T-cell (primary cell): ENCODE measurements at regions of chr9 and their contacts with region 1.

Region 1: GRCh38 chr9:127937388-127938280 is at the start of gene DPM2:
- DNase-seq: peak; percentile 73 to 93 (median 86)
- ATAC-seq: peak; percentile 76 to 89 (median 82)
- H3K4me3 ChIP-seq: peak within 1 kb of the TSS; percentile 68 to 71
- H3K4me3 Mint-ChIP-seq: peak within 1 kb of the TSS; percentile 82 to 87 (median 86)
- H3K27ac ChIP-seq: peak within 1 kb of the TSS; percentile 59
- H3K27ac Mint-ChIP-seq: peak within 1 kb of the TSS; percentile 88 to 93
- H3K4me1 ChIP-seq: peaks cover 9 to 44% of the 10 kb centered on the region in 2 experiments
- H3K4me1 Mint-ChIP-seq: peaks cover 45 to 57% (median 55%) of the 10 kb centered on the region in 3 donors
- H3K27me3 ChIP-seq: no peaks in the 10 kb centered on the region
- H3K27me3 Mint-ChIP-seq: peaks cover 0 to 3% of the 10 kb centered on the region in 2 donors
- total RNA-seq, gene DPM2: 32.3 to 66.5 (median 60.5) TPM

Region 2: GRCh38 chr9:127715394-127716337 is 222.0 kb before region 1 on chr9 and contains the starts of genes PTRH1 and TTC16:
- CTCF ChIA-PET with region 1: no interaction called
- POLR2A ChIA-PET with region 1: no interaction called
- DNase-seq: peak; percentile 89 to 98 (median 95)
- ATAC-seq: peak; percentile 92 to 95 (median 94)
- H3K4me3 ChIP-seq: peak within 1 kb of the TSS; percentile 78 to 97
- H3K4me3 Mint-ChIP-seq: peak within 1 kb of the TSS; percentile 94 to 98 (median 98)
- H3K27ac ChIP-seq: peak within 1 kb of the TSS; percentile 75
- H3K27ac Mint-ChIP-seq: peak within 1 kb of the TSS; percentile 91 to 95
- H3K4me1 ChIP-seq: peaks cover 8 to 70% of the 10 kb centered on the region in 2 experiments
- H3K4me1 Mint-ChIP-seq: peaks cover 34 to 46% (median 38%) of the 10 kb centered on the region in 3 donors
- H3K27me3 ChIP-seq: no peaks in the 10 kb centered on the region
- H3K27me3 Mint-ChIP-seq: no peaks in the 10 kb centered on the region
- total RNA-seq, gene PTRH1: 4.4 to 15.9 (median 12.9) TPM
- total RNA-seq, gene TTC16: 4.6 to 31.8 (median 6.2) TPM

Region 3: GRCh38 chr9:127899128-127899946 is 38.3 kb before region 1 on chr9 and contains the start of gene ST6GALNAC6:
- CTCF ChIA-PET with region 1: no interaction called
- POLR2A ChIA-PET with region 1: interaction called in 1 of 2 experiments, 14 read pairs
- DNase-seq: peak in 32 of 35 experiments; percentile 30 to 81 (median 52)
- ATAC-seq: peak; percentile 81 to 87 (median 85)
- H3K4me3 ChIP-seq: peak within 1 kb of the TSS; percentile 65 to 89
- H3K4me3 Mint-ChIP-seq: peak within 1 kb of the TSS; percentile 81 to 87 (median 87)
- H3K27ac ChIP-seq: peak within 1 kb of the TSS; percentile 58
- H3K27ac Mint-ChIP-seq: peak within 1 kb of the TSS; percentile 81 to 84
- H3K4me1 ChIP-seq: peaks cover 21 to 67% of the 10 kb centered on the region in 2 experiments
- H3K4me1 Mint-ChIP-seq: peaks cover 44 to 48% (median 45%) of the 10 kb centered on the region in 3 donors
- H3K27me3 ChIP-seq: no peaks in the 10 kb centered on the region
- H3K27me3 Mint-ChIP-seq: no peaks in the 10 kb centered on the region
- total RNA-seq, gene ST6GALNAC6: 73.0 to 123 (median 86.3) TPM

Region 4: DNA sequence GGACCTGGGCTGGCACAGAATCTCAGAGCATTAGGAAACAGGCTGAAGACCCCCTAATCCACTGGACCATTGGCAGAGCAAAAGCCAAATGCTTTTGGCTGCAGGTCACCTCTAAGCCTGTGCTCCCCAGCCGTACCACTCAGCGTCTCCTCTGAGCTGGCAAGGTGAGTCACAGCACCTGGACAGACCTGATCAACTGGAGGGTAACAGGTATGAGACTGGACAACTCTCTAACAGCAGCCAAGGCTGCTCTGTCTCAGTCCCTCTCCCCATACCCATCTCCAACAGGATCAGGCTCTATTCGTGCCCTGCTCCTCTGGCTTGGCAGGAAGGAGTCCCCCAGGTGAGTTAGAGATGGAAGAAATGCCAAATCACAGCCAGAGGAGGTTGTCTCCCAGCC is 333.5 kb after region 1 on chr9:
- CTCF ChIA-PET with region 1: interaction called in 1 of 2 experiments, 11 read pairs
- POLR2A ChIA-PET with region 1: no interaction called
- DNase-seq: no peak
- ATAC-seq: no peak
- H3K4me3 ChIP-seq: no peak overlapping the region
- H3K4me3 Mint-ChIP-seq: no peak overlapping the region
- H3K27ac ChIP-seq: no peak overlapping the region
- H3K27ac Mint-ChIP-seq: no peak overlapping the region
- H3K4me1 ChIP-seq: peaks cover 3 to 12% of the 10 kb centered on the region in 2 experiments
- H3K4me1 Mint-ChIP-seq: peaks cover 9 to 22% (median 22%) of the 10 kb centered on the region in 3 donors
- H3K27me3 ChIP-seq: no peaks in the 10 kb centered on the region
- H3K27me3 Mint-ChIP-seq: no peaks in the 10 kb centered on the region